Sigmoid colon (tissue), 7 donors: ENCODE measurements at regions of chr11 and their contacts with region 1.

Region 1: DNA sequence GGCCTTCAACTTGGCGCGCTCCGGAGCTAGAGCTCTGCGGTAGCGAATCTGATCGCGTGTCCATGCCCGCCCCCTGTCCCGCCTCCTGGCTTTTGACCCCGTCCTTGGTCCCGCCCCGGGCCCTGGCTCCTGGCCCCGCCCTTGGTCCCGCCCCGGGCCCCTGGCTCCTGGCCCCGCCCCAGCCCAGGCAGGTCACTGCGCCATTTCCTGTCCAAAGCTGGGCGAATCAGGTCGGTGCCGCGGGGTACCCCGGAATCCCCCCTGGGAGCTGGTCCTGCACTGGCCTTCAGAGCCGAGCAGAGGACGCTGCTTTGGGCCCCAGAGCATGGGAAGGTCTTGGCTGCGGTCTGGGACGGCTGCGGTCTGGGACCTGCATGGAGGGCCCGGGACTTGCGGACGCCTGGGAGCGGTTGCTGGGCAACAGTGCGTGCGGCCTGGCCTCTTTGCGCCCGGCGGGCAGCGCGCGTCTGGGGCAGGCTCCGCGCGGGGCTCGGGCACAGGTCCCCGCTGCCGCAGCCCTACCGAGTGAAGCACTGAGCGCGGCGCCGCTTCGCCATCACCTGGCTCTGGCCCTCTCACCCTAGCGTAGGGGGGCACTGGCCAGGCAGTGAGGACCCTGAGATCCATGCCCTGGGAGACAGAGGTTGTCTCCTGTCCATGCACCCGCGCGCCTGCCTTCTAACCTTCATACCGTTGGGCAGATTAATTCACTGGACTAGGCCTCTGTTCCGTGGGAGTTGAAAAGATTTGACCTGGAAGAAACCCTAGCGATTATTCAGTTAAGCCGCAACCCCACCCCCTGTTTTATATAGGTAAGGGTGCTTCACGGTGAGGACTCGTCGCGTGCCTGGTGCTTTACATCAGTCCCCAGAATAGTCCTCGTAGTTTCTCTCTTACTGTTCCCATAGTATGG is at the start of gene TTC12:
- DNase-seq: peak; percentile 96
- H3K4me3 ChIP-seq: peak within 1 kb of the TSS; percentile 53 to 76 (median 64)
- H3K27ac ChIP-seq: peak within 1 kb of the TSS; percentile 87 to 92 (median 89)
- H3K4me1 ChIP-seq: peaks cover 0 to 23% (median 19%) of the 10 kb centered on the region in 4 donors
- H3K27me3 ChIP-seq: no peaks in the 10 kb centered on the region
- CTCF ChIP-seq: no peak
- EP300 ChIP-seq: no peak
- POLR2A ChIP-seq: peak; percentile 13 to 33
- total RNA-seq, gene TTC12: 8.6 to 22.4 (median 14.9) TPM

Region 2: DNA sequence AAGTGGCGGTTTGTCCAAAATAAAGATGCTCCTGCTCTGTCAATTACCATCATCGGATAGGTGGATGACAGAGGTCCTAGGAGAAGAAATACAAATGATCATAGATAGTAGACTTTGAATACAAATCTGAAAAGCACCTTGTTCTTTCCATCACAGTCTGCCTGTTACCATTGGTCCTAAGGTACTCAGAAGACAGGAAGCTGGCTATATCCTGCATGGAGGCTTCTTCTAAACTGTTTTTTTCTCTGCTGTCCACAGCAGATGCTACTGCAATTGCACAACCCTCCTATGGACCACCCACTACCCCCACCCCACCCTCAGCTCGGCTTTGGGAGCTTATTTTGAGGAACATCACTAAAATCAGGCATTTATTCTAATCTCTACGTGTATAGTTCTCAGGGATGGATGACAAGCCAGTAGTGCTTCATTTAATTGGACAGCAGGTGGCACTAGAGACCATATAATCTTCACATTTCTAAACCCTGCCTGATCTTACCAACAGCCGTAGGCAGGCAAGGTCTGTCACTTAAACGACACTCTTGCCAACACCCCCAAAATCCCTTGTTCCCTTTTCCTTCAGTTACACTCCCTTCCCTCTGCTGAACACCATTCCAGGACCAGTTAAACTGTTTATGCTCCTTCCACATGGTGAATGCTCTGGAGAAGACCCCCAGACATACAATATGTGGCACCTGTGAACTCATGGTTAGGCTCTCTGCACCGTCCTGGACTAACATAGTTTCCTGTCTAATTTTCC is 1095.0 kb before region 1 on chr11:
- intact Hi-C with region 1: loop called (anchors 10 kb)
- DNase-seq: peak; percentile 56
- H3K4me3 ChIP-seq: no peak overlapping the region
- H3K27ac ChIP-seq: no peak overlapping the region
- H3K4me1 ChIP-seq: peaks cover 0 to 21% (median 17%) of the 10 kb centered on the region in 4 donors
- H3K27me3 ChIP-seq: no peaks in the 10 kb centered on the region
- CTCF ChIP-seq: peak; percentile 75 to 82 (median 76)
- EP300 ChIP-seq: no peak
- POLR2A ChIP-seq: no peak

Region 3: DNA sequence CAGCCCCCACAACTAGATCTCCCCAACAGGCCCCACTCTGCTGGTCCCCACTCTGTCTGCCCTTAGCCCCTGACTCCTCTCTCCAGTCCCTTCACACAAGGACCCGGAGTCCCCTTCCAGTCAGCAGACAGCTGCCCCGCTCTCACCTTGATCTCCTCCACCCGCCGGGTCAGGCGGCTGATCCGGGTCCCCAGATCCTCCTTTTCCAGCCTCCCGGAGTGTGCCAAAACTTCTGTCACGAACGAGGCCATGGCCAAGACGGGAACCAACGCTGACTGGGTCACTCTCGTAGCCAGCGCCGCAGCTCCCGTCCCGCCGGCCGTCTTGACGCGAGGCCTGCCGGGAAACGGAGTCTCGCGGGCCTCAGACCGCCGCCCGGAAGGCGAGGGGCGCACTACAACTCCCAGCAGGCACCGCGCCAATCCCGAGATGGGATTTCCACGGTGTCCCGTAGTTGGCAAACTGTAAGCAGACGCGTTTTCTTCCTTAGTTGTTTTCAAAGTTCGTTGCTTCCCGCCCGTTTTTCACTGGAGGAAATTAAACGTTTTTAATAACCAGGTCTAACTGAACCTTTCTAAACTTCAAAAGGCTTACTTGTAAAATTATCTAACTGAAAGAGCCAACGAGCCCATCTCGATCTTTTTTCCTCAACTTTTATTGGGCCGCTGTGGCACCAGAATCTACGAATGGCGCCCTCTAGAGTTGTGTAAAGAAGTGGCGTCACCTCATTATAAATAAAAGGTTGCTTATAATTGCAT is 458.9 kb after region 1 on chr11 and contains the start of gene ZW10:
- intact Hi-C with region 1: loop called (anchors 10 kb)
- DNase-seq: peak; percentile 98
- H3K4me3 ChIP-seq: peak within 1 kb of the TSS; percentile 74 to 87 (median 80)
- H3K27ac ChIP-seq: peak within 1 kb of the TSS; percentile 78 to 88 (median 86)
- H3K4me1 ChIP-seq: peaks cover 0 to 22% (median 19%) of the 10 kb centered on the region in 4 donors
- H3K27me3 ChIP-seq: no peaks in the 10 kb centered on the region
- CTCF ChIP-seq: peak; percentile 64 to 83 (median 80)
- EP300 ChIP-seq: no peak
- POLR2A ChIP-seq: peak in 1 of 2 donors; percentile 16
- total RNA-seq, gene ZW10: 9.8 to 14.4 (median 12.8) TPM